ENCODE measurements at regions of chr19 and their contacts with region 1.

Region 1: GRCh38 chr19:43668406-43669158 is 1.4 kb downstream of the PLAUR start:
- DNase-seq: peak; percentile 94
- H3K4me3 Mint-ChIP-seq: peak overlapping the region; percentile 93
- H3K27ac Mint-ChIP-seq: peak overlapping the region; percentile 81
- H3K4me1 Mint-ChIP-seq: peaks cover 39% of the 10 kb centered on the region
- H3K27me3 Mint-ChIP-seq: peaks cover 2% of the 10 kb centered on the region

Region 2: DNA sequence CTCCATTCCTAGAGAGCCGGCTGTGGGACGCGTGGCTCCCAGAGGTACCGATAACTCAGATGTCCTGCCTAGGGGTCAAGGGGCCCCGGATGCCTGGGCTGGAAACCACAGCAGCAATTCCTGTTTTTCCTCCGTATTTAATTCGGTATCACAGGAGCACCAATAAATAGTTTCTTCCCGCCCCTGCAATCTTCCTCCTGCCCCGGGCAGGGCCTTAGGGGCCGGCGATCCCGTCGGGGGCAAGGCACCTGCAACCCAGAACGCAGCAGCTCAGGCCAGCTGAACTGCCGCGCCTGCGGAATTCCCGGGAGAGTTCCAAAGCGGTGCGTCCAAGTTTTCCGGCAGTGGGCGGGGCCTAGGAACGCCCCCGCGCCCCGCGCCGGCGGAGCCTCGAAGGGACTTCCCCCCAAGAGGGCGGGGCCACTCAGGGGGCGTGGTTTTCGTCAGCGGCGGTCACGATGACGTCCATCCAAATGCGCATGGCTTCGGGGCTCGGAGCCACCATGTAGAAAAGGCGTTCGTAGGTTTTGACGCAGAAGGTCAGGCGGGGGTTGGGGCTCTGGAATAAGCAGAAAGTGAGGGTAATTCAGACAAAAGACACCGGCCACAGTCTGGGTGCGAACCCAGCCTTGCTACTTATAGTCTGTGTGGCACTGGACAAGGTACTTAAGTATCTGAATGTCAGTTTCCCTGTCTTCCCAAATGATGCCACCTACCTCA is 193.4 kb before region 1 on chr19:
- intact Hi-C with region 1: loop called (anchors 1 kb)
- DNase-seq: peak; percentile 91
- H3K4me3 Mint-ChIP-seq: peak overlapping the region; percentile 77
- H3K27ac Mint-ChIP-seq: peak overlapping the region; percentile 89
- H3K4me1 Mint-ChIP-seq: peaks cover 14% of the 10 kb centered on the region
- H3K27me3 Mint-ChIP-seq: no peaks in the 10 kb centered on the region

Region 3: GRCh38 chr19:43575156-43575950 is 93.2 kb before region 1 on chr19 and contains the starts of genes PINLYP and XRCC1:
- intact Hi-C with region 1: loop called (anchors 1 kb)
- DNase-seq: peak; percentile 95
- H3K4me3 Mint-ChIP-seq: peak within 1 kb of the TSS; percentile 96
- H3K27ac Mint-ChIP-seq: peak within 1 kb of the TSS; percentile 91
- H3K4me1 Mint-ChIP-seq: peaks cover 25% of the 10 kb centered on the region
- H3K27me3 Mint-ChIP-seq: peaks cover 3% of the 10 kb centered on the region
- total RNA-seq, gene PINLYP: 4.9 and 5.7 TPM in 2 replicates
- total RNA-seq, gene XRCC1: 27.4 and 28.7 TPM in 2 replicates

Region 4: DNA sequence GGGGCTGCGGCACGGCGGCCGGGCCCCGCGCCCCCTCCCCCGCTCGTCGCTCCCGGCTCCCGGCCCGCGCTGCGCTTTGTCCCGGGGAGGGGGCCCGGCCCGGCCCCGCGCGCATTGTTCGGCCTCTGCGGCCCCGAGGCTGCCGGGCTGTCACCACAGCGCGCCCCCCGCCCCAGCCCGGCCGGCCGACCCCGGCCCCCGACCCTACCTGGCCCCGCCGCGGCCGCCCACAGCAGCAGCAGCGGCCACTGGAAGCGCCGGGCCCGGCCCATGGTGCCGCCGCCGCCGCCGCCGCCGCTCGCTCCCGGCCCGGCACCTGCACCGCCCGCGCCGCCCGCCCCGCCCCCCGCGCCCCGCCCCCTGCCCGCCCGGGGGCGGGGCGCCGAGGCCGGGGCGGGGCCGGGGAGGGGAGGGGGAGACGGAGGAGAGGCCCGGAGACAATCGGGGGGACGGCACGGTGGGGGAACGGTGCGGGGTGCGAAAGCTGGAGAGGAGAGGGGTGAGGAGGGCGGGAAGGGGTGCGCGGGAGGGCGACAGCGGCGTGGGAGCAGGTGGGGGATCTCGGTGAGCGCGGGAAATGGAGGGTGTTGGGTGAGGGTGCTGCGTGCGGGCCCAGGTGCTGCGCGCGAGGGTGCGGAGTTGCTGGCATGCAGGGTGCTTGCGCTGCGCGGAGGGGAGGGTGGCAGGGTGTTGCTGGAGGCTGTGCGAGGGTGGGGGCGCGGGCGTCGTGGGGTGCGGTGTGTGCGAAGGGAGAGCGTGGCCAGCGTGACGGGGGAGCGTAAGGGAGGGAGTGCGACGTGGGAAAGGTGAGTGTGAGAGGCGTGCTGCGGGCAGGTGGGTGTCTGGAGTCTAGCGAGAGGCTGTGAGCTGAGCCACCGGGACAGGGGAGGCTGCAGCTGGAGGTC is 28.8 kb before region 1 on chr19 and contains the start of gene CADM4:
- intact Hi-C with region 1: loop called (anchors 1 kb)
- DNase-seq: peak; percentile 30
- H3K4me3 Mint-ChIP-seq: peak within 1 kb of the TSS; percentile 80
- H3K27ac Mint-ChIP-seq: peak within 1 kb of the TSS; percentile 46
- H3K4me1 Mint-ChIP-seq: no peaks in the 10 kb centered on the region
- H3K27me3 Mint-ChIP-seq: peaks cover 41% of the 10 kb centered on the region
- total RNA-seq, gene CADM4: 0.32 and 0.39 TPM in 2 replicates

Region 5: GRCh38 chr19:43754503-43755255 is 86.1 kb after region 1 on chr19 and contains the start of gene SMG9:
- intact Hi-C with region 1: loop called (anchors 1 kb)
- DNase-seq: peak; percentile 99
- H3K4me3 Mint-ChIP-seq: peak within 1 kb of the TSS; percentile 98
- H3K27ac Mint-ChIP-seq: peak within 1 kb of the TSS; percentile 100
- H3K4me1 Mint-ChIP-seq: peaks cover 57% of the 10 kb centered on the region
- H3K27me3 Mint-ChIP-seq: peaks cover 2% of the 10 kb centered on the region
- total RNA-seq, gene SMG9: 86.6 and 89.2 TPM in 2 replicates

Region 6: GRCh38 chr19:43934985-43935708 is 266.6 kb after region 1 on chr19 and contains the start of gene ZNF45:
- intact Hi-C with region 1: loop called (anchors 10 kb)
- DNase-seq: peak; percentile 81
- H3K4me3 Mint-ChIP-seq: peak within 1 kb of the TSS; percentile 95
- H3K27ac Mint-ChIP-seq: peak within 1 kb of the TSS; percentile 83
- H3K4me1 Mint-ChIP-seq: peaks cover 20% of the 10 kb centered on the region
- H3K27me3 Mint-ChIP-seq: no peaks in the 10 kb centered on the region
- total RNA-seq, gene ZNF45: 11.5 and 13.1 TPM in 2 replicates